Calu3 (cell line): ENCODE measurements at regions of chr19 and their contacts with region 1.

Region 1: DNA sequence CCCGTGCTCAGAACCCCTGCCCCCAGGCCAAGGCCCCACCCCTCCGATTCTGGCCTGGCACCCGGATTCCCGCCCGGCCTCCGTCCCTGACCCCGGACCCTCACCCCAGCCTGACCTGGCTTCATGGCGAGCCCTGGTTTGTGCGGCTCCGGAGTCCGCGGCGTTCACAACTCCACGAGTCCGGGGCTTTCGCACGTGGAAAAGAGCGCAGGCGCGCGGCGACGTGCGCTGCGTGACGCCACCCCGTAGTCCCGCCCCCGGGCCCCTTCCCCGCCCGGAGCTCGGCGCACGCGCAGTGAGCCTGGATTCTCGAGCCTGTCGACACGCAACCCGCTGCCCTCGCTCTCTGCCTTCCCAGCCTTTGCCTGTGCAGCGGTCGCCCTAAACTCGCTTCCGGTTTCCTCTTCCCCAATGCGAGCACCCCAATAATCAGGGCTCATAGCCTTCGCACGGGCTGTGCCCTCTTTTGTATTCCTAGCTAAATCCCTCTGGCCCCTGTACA is at the start of gene FBL:
- DNase-seq: peak; percentile 98
- H3K4me3 Mint-ChIP-seq: peak within 1 kb of the TSS; percentile 82
- H3K27ac Mint-ChIP-seq: peak within 1 kb of the TSS; percentile 85
- H3K4me1 Mint-ChIP-seq: peaks cover 44% of the 10 kb centered on the region
- H3K27me3 Mint-ChIP-seq: no peaks in the 10 kb centered on the region
- CTCF ChIP-seq: no peak
- total RNA-seq, gene FBL: 641 and 724 TPM in 2 replicates

Region 2: DNA sequence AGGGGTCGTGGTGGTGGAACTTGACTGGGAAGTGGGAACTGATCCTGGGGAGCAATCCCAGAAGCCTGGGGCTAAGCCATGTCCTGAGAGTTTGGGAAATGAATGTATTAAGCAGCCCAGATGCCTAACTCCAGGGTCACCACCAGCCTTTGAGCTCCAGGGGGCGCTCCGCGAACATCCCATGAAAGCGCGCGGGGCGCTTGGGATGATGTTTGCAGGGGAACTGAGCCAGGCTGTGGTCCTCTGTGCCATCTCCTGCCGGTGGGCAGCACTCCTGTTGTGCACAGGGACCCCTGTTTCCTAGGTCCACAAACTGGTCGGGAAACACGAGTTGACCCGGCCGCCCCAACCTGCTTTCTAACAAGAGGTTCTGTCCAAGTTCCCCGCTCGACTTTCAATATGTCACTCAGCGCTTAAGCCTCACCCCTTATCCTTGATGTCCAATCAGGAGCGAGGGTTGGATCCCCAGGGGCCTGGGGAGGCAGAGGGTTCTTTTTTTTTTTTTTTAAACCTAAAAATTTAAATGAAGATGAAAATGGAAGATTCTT is 53.2 kb before region 1 on chr19:
- CTCF ChIA-PET with region 1: interaction called, 13 read pairs
- intact Hi-C with region 1: loop called (anchors 1 kb)
- DNase-seq: peak; percentile 86
- H3K4me3 Mint-ChIP-seq: peak overlapping the region; percentile 53
- H3K27ac Mint-ChIP-seq: no peak overlapping the region
- H3K4me1 Mint-ChIP-seq: peaks cover 7% of the 10 kb centered on the region
- H3K27me3 Mint-ChIP-seq: peaks cover 34% of the 10 kb centered on the region
- CTCF ChIP-seq: peak; percentile 91

Region 3: DNA sequence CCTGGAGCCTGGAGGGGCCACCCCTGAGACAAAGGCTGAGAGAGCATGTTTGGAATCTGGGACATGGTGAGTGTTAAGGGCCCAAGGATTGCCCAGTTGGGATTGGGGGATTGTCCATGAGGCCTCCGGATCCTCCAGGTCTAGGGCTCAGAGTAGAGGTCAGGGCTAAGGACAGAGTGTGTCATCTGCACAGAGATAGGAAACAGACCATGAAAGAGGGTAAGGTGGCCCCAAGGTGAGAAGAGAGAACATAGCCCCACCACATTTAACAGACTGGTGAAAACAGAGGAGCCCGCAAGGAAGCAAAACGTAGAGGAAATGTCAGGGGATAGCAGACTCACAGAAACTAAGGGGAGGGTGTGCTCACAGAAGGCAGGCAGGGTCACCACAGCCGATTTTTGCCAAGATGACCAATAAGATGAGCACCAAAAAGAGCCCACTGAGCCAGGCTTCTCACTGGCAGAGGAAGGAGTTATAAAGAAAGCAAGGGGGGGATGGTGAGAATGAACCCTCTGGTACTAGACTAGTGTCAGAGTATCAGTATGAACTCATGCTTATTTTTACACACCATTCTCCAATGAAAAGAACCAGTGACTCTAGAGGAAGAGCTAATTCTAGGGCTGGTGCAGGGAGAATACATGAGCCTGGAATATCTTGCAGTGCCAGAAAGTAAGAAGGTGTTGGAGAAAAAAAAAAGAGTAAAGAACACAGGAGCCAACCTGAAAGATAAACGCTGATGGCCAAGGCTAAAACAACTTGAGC is 29.8 kb before region 1 on chr19:
- CTCF ChIA-PET with region 1: no interaction called
- intact Hi-C with region 1: no loop called
- DNase-seq: no peak
- H3K4me3 Mint-ChIP-seq: no peak overlapping the region
- H3K27ac Mint-ChIP-seq: no peak overlapping the region
- H3K4me1 Mint-ChIP-seq: no peaks in the 10 kb centered on the region
- H3K27me3 Mint-ChIP-seq: no peaks in the 10 kb centered on the region
- CTCF ChIP-seq: no peak

Region 4: GRCh38 chr19:39833464-39834286 is 12.6 kb before region 1 on chr19 and contains the start of gene DYRK1B:
- CTCF ChIA-PET with region 1: interaction called, 22 read pairs
- intact Hi-C with region 1: no loop called
- DNase-seq: peak; percentile 98
- H3K4me3 Mint-ChIP-seq: peak within 1 kb of the TSS; percentile 81
- H3K27ac Mint-ChIP-seq: peak within 1 kb of the TSS; percentile 68
- H3K4me1 Mint-ChIP-seq: peaks cover 35% of the 10 kb centered on the region
- H3K27me3 Mint-ChIP-seq: no peaks in the 10 kb centered on the region
- CTCF ChIP-seq: no peak
- total RNA-seq, gene DYRK1B: 21.5 and 24.6 TPM in 2 replicates

Region 5: DNA sequence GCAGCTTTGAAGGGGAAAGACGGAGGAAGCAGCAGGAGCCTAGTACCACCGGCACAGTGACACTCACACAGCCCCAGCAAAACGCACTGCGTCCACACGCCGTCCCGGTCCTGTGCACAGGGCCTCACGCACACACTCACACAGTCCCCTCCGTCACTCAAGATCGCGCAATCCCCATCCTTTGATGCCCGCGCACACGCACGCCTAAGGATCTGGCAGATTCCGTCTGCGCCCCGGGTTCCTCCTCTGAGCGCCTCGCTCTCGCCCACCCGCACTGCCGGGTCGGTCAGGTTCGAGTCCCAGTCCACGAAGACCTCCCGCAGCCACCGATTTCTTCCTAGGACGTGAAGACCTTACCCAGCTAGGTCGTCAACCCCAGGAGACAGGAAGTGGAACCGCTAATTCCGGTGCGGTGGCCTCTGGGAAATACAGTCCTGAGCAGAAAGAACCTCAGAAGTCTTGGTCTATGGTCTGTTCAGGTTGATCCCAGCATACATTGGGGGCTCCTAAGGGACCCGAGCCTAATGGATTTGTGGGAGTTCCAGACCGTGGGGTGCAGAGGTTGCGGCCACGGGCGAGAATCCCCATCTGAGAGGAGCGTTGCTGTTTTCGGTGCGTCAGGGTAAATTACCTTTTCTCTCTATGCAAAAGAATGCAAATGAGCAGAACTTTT is 209.7 kb after region 1 on chr19 and contains the start of gene ZNF780B:
- CTCF ChIA-PET with region 1: no interaction called
- intact Hi-C with region 1: no loop called
- DNase-seq: peak; percentile 69
- H3K4me3 Mint-ChIP-seq: peak within 1 kb of the TSS; percentile 99
- H3K27ac Mint-ChIP-seq: peak within 1 kb of the TSS; percentile 77
- H3K4me1 Mint-ChIP-seq: peaks cover 17% of the 10 kb centered on the region
- H3K27me3 Mint-ChIP-seq: no peaks in the 10 kb centered on the region
- CTCF ChIP-seq: no peak
- total RNA-seq, gene ZNF780B: 30.2 and 37.8 TPM in 2 replicates